Tibial artery (tissue), 4 donors: ENCODE measurements at regions of chr2 and their contacts with region 1.

Region 1: GRCh38 chr2:27489498-27490397 is at the start of gene IFT172:
- DNase-seq: peak; percentile 99
- H3K4me3 ChIP-seq: peak within 1 kb of the TSS; percentile 60 to 64
- H3K27ac ChIP-seq: peak within 1 kb of the TSS; percentile 64 to 76
- H3K4me1 ChIP-seq: peaks cover 0 to 23% (median 15%) of the 10 kb centered on the region in 4 donors
- H3K27me3 ChIP-seq: no peaks in the 10 kb centered on the region
- CTCF ChIP-seq: no peak

Region 2: DNA sequence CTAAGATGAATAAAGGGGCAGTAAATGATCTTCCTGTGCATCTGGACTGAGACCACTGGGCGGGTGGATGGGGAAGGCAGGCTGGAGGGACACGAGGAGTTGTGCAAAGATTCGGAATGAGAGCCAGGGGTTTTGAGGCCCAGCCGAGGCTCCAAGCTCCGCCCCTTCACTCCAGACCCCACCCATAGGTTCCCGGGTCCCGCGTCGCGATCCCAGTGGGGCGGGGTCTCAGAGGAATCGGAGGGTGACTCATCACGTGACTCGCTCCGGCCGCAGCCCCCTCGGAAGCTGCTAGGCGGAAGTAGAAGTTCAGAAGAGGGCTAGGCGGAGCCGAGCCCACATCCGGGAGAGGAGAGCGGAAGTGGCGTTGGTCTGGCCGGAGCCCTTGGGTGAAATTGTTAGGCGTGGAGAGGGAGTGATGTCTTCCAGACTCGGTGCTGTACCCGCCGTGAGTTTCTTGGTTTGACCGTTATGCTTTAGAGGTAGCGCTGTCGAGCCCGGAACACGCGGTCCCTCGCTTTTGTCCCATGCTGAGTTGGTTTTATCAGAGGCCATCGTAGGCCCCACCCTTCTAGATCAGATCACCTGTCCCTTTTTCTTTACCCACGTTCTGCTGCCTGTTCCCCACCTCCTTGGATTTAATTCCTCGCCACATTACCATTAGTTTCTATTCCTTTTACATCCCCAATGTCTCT is 93.1 kb after region 1 on chr2 and contains the start of gene ZNF512:
- intact Hi-C with region 1: loop called (anchors 10 kb)
- DNase-seq: peak; percentile 89 to 94
- H3K4me3 ChIP-seq: peak within 1 kb of the TSS; percentile 64 to 69
- H3K27ac ChIP-seq: peak within 1 kb of the TSS; percentile 74 to 78
- H3K4me1 ChIP-seq: peaks cover 0 to 39% (median 17%) of the 10 kb centered on the region in 4 donors
- H3K27me3 ChIP-seq: no peaks in the 10 kb centered on the region
- CTCF ChIP-seq: no peak